Naive thymus-derived CD8-positive, alpha-beta T cell (primary cell): ENCODE measurements at regions of chr1 and their contacts with region 1.

Region 1: GRCh38 chr1:44631647-44632539 is 42.4 kb downstream of the TMEM53 start:
- DNase-seq: peak; percentile 79 to 94 (median 86)
- ATAC-seq: peak; percentile 77 to 78
- H3K4me3 Mint-ChIP-seq: peak overlapping the region; percentile 90 to 96 (median 92)
- H3K27ac Mint-ChIP-seq: peak overlapping the region; percentile 96 to 99 (median 98)
- H3K4me1 Mint-ChIP-seq: peaks cover 25 to 53% (median 48%) of the 10 kb centered on the region in 4 donors
- H3K27me3 Mint-ChIP-seq: no peaks in the 10 kb centered on the region

Region 2: GRCh38 chr1:44213222-44214112 is 418.4 kb before region 1 on chr1 and contains the start of gene DMAP1:
- POLR2A ChIA-PET with region 1: interaction called, 15 read pairs
- DNase-seq: peak; percentile 70 to 93 (median 84)
- ATAC-seq: peak; percentile 89 to 91
- H3K4me3 Mint-ChIP-seq: peak within 1 kb of the TSS; percentile 88 to 97 (median 94)
- H3K27ac Mint-ChIP-seq: peak within 1 kb of the TSS; percentile 89 to 99 (median 95)
- H3K4me1 Mint-ChIP-seq: peaks cover 22 to 62% (median 40%) of the 10 kb centered on the region in 4 donors
- H3K27me3 Mint-ChIP-seq: no peaks in the 10 kb centered on the region
- polyA plus RNA-seq, gene DMAP1: 32.6 to 44.4 (median 42.3) TPM

Region 3: GRCh38 chr1:44642255-44642654 is 10.4 kb after region 1 on chr1:
- POLR2A ChIA-PET with region 1: interaction called, 13 read pairs
- DNase-seq: no peak
- ATAC-seq: no peak
- H3K4me3 Mint-ChIP-seq: no peak overlapping the region
- H3K27ac Mint-ChIP-seq: peak overlapping the region in 6 of 10 donors; percentile 0 to 87 (median 58)
- H3K4me1 Mint-ChIP-seq: peaks cover 0 to 20% (median 12%) of the 10 kb centered on the region in 4 donors
- H3K27me3 Mint-ChIP-seq: no peaks in the 10 kb centered on the region

Region 4: GRCh38 chr1:44652445-44653106 is 20.7 kb after region 1 on chr1:
- POLR2A ChIA-PET with region 1: interaction called, 17 read pairs
- DNase-seq: peak; percentile 53 to 82 (median 70)
- ATAC-seq: peak; percentile 94 to 95
- H3K4me3 Mint-ChIP-seq: no peak overlapping the region
- H3K27ac Mint-ChIP-seq: peak overlapping the region in 9 of 10 donors; percentile 6 to 79 (median 66)
- H3K4me1 Mint-ChIP-seq: peaks cover 0 to 12% (median 4%) of the 10 kb centered on the region in 4 donors
- H3K27me3 Mint-ChIP-seq: no peaks in the 10 kb centered on the region

Region 5: DNA sequence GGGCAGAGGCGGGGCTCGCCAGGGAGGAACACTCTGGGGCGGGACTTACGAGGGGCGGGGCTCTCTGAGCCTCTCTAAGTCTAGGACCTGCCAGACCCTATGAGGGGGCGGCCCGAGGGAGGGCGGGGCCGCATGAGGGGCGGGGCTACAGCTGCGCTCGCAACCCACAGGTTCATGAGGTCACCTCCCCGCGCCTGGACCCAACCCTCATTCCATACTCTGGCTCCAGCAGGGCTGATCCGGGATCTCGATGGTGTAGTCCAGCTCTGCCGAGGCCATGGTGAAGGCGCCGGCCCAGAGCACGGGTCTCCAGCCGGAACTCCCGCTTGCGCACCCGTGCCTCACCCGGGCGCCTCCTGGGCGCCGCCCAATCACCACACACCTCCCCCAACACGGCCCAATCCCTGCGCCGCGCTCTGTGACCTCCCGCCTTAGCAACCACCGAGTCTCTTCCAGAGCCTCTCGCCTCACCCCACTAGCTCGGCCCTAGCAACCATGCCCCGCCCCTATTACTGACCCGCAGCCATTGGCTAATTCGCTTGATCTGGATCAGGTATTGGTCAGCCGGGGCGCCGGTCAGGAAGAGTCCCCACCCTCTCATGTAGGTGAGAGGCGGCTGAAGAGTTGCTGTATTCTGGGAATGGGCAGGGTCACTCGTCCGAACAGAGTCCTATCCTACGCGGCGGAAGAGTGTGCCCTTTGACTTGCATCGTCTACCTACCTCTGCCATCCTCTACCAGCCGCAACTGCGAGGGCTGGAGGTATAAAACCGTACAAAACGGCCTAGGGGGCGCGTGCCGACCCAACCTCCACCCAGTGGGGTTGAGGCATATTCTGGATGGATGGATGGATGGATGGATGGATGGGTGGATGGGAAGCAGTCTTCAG is 42.5 kb after region 1 on chr1 and contains the starts of genes ARMH1 and TMEM53:
- POLR2A ChIA-PET with region 1: interaction called, 32 read pairs
- DNase-seq: peak; percentile 91 to 98 (median 94)
- ATAC-seq: peak; percentile 94
- H3K4me3 Mint-ChIP-seq: peak within 1 kb of the TSS; percentile 87 to 95 (median 91)
- H3K27ac Mint-ChIP-seq: peak within 1 kb of the TSS; percentile 69 to 96 (median 92)
- H3K4me1 Mint-ChIP-seq: peaks cover 4 to 33% (median 17%) of the 10 kb centered on the region in 4 donors
- H3K27me3 Mint-ChIP-seq: no peaks in the 10 kb centered on the region
- polyA plus RNA-seq, gene ARMH1: 46.2 to 75.6 (median 53.2) TPM
- polyA plus RNA-seq, gene TMEM53: 4.6 to 5.9 (median 5.5) TPM